ENCODE measurements at regions of chr10 and their contacts with region 1.

Region 1: GRCh38 chr10:63388421-63389031 is 77.3 kb downstream of the JMJD1C start:
- DNase-seq: peak in 6 of 9 donors; percentile 20 to 60 (median 47)
- ATAC-seq: peak; percentile 77
- H3K4me3 ChIP-seq: peak overlapping the region; percentile 36
- H3K4me3 Mint-ChIP-seq: peak overlapping the region; percentile 42 to 81 (median 72)
- H3K27ac ChIP-seq: peak overlapping the region; percentile 5
- H3K27ac Mint-ChIP-seq: peak overlapping the region; percentile 21 to 76 (median 49)
- H3K4me1 ChIP-seq: peaks cover 12 to 21% of the 10 kb centered on the region in 2 donors
- H3K4me1 Mint-ChIP-seq: peaks cover 45 to 79% (median 69%) of the 10 kb centered on the region in 7 donors
- H3K27me3 ChIP-seq: no peaks in the 10 kb centered on the region
- H3K27me3 Mint-ChIP-seq: no peaks in the 10 kb centered on the region

Region 2: DNA sequence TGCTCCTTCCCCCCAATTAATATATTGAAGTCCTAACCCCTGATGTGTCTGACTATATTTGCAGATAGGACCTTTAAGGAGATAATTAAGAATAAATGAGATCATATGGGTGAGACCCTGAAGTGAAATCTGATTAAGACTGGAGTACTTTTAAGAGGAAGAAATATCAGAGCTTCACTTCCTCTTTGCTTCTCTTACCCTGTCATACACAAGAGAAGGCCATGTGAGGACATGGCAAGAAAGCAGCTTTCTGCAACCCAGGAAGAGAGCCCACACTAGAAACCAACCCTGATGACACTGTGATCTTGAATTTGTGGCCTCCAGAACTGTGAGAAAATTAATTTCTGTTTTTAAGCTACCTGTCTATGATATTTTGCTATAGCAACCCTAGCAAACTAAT is 33.1 kb after region 1 on chr10:
- CTCF ChIA-PET with region 1: no interaction called
- POLR2A ChIA-PET with region 1: no interaction called
- intact Hi-C with region 1: loop called in 1 of 2 experiments (anchors 5 kb)
- DNase-seq: peak in 7 of 9 donors; percentile 35 to 71 (median 53)
- ATAC-seq: peak; percentile 95
- H3K4me3 ChIP-seq: no peak overlapping the region
- H3K4me3 Mint-ChIP-seq: peak overlapping the region in 9 of 10 donors; percentile 49 to 73 (median 68)
- H3K27ac ChIP-seq: peak overlapping the region; percentile 36
- H3K27ac Mint-ChIP-seq: peak overlapping the region; percentile 37 to 97 (median 91)
- H3K4me1 ChIP-seq: peaks cover 0 to 15% of the 10 kb centered on the region in 2 donors
- H3K4me1 Mint-ChIP-seq: peaks cover 16 to 61% (median 49%) of the 10 kb centered on the region in 7 donors
- H3K27me3 ChIP-seq: no peaks in the 10 kb centered on the region
- H3K27me3 Mint-ChIP-seq: no peaks in the 10 kb centered on the region

Region 3: DNA sequence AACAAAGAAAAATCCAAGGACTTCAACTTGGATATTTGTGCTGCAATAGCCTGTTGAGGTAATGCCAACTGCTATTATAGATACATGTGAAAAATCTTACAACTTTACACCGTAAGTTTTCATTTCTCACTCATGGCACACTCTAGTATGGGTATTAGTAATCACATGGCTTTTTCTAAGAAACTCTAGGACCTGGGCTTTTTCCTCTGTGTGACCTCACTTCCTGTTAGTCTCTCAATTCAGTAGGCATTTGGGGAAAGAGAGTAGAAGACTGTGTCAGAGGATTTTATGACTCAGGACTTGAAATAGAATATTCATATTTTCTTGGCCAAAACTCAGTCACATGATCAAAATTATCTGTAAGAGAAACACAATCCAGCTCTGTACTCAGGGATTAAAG is 1182.5 kb after region 1 on chr10:
- CTCF ChIA-PET with region 1: no interaction called
- POLR2A ChIA-PET with region 1: no interaction called
- intact Hi-C with region 1: no loop called
- DNase-seq: no peak
- ATAC-seq: no peak
- H3K4me3 ChIP-seq: no peak overlapping the region
- H3K4me3 Mint-ChIP-seq: no peak overlapping the region
- H3K27ac ChIP-seq: no peak overlapping the region
- H3K27ac Mint-ChIP-seq: no peak overlapping the region
- H3K4me1 ChIP-seq: no peaks in the 10 kb centered on the region
- H3K4me1 Mint-ChIP-seq: no peaks in the 10 kb centered on the region
- H3K27me3 ChIP-seq: no peaks in the 10 kb centered on the region
- H3K27me3 Mint-ChIP-seq: no peaks in the 10 kb centered on the region

Measured in naive thymus-derived CD4-positive, alpha-beta T cell (primary cell).